Naive thymus-derived CD4-positive, alpha-beta T cell (primary cell): ENCODE measurements at regions of chr6 and their contacts with region 1.

Region 1: DNA sequence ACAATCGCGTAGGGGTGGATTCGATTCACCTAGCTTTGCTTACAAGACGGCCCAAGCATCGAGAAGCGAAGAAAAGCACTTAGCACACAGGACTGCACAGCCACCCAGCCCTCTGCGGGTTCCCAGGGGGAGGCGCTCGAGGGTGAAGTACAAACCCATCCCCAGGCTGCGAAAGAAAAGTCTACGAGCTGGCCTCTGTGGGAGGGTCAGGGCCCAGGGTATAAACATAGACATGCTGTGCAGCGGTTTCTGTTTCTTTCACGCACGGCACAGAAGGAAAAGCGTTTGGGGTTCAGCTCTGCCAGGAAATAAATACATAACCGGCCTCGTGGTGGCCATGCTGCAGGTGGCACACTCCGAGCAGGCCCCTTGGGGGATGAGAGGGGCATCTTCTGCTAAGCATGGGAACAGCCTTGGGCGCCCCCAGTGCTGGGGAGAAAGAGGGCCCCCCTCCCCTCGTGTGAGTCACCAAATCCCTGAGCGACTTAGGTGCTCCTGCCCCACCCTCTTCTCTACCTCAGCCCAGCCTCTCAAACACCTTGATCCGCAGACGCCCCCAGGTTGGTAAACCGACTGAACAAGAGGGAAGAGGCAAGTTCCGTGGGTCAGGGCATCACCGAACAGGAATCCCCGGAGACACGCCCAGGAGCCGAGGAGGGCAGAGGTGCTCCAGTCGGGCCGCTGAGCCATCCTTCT is 91.6 kb upstream of the RIPOR2 start:
- DNase-seq: peak; percentile 47 to 79 (median 69)
- ATAC-seq: peak; percentile 97
- H3K4me3 ChIP-seq: peak overlapping the region; percentile 50
- H3K4me3 Mint-ChIP-seq: peak overlapping the region; percentile 63 to 84 (median 81)
- H3K27ac ChIP-seq: peak overlapping the region; percentile 50
- H3K27ac Mint-ChIP-seq: peak overlapping the region; percentile 60 to 87 (median 83)
- H3K4me1 ChIP-seq: peaks cover 22 to 30% of the 10 kb centered on the region in 2 donors
- H3K4me1 Mint-ChIP-seq: peaks cover 27 to 57% (median 48%) of the 10 kb centered on the region in 7 donors
- H3K27me3 ChIP-seq: no peaks in the 10 kb centered on the region
- H3K27me3 Mint-ChIP-seq: no peaks in the 10 kb centered on the region

Region 2: DNA sequence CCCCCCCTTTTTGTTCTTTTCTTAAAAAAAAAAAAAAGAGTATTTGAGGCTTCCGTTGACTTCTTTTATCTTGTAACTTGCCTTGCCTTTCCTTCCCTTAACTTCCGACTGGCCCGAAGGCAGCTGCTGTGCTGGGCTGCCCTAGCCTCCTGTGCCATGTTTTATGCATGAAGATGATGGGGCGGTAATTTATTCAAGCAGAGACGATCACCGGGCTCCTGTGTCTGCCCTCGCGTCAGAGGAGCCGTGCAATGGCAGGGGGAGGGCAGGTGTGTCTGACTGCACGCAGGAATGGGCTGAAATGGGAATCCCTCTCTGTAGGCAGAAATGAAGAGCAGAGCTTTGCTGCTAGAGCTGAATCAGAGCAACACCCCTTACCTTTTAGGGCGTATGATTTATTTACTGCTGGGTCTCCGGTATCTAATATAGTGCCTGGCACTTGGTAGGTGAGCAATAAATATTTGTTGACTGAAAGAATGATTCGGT is 14.7 kb after region 1 on chr6:
- CTCF ChIA-PET with region 1: interaction called, 26 read pairs
- POLR2A ChIA-PET with region 1: interaction called, 61 read pairs
- intact Hi-C with region 1: loop called (anchors 1 kb)
- DNase-seq: peak in 7 of 9 donors; percentile 45 to 67 (median 49)
- ATAC-seq: peak; percentile 73
- H3K4me3 ChIP-seq: peak overlapping the region; percentile 60
- H3K4me3 Mint-ChIP-seq: peak overlapping the region; percentile 88 to 97 (median 92)
- H3K27ac ChIP-seq: peak overlapping the region; percentile 64
- H3K27ac Mint-ChIP-seq: peak overlapping the region; percentile 71 to 98 (median 90)
- H3K4me1 ChIP-seq: peaks cover 35 to 51% of the 10 kb centered on the region in 2 donors
- H3K4me1 Mint-ChIP-seq: peaks cover 38 to 62% (median 56%) of the 10 kb centered on the region in 7 donors
- H3K27me3 ChIP-seq: no peaks in the 10 kb centered on the region
- H3K27me3 Mint-ChIP-seq: peaks cover 0 to 3% (median 0%) of the 10 kb centered on the region in 5 donors

Region 3: GRCh38 chr6:25053875-25054371 is 26.6 kb after region 1 on chr6:
- CTCF ChIA-PET with region 1: interaction called, 16 read pairs
- POLR2A ChIA-PET with region 1: interaction called, 3 read pairs
- intact Hi-C with region 1: loop called in 1 of 2 experiments (anchors 1 kb)
- DNase-seq: no peak
- ATAC-seq: no peak
- H3K4me3 ChIP-seq: no peak overlapping the region
- H3K4me3 Mint-ChIP-seq: no peak overlapping the region
- H3K27ac ChIP-seq: no peak overlapping the region
- H3K27ac Mint-ChIP-seq: peak overlapping the region in 1 of 9 donors; percentile 59
- H3K4me1 ChIP-seq: peaks cover 36 to 59% of the 10 kb centered on the region in 2 donors
- H3K4me1 Mint-ChIP-seq: peaks cover 39 to 80% (median 65%) of the 10 kb centered on the region in 7 donors
- H3K27me3 ChIP-seq: no peaks in the 10 kb centered on the region
- H3K27me3 Mint-ChIP-seq: no peaks in the 10 kb centered on the region

Region 4: DNA sequence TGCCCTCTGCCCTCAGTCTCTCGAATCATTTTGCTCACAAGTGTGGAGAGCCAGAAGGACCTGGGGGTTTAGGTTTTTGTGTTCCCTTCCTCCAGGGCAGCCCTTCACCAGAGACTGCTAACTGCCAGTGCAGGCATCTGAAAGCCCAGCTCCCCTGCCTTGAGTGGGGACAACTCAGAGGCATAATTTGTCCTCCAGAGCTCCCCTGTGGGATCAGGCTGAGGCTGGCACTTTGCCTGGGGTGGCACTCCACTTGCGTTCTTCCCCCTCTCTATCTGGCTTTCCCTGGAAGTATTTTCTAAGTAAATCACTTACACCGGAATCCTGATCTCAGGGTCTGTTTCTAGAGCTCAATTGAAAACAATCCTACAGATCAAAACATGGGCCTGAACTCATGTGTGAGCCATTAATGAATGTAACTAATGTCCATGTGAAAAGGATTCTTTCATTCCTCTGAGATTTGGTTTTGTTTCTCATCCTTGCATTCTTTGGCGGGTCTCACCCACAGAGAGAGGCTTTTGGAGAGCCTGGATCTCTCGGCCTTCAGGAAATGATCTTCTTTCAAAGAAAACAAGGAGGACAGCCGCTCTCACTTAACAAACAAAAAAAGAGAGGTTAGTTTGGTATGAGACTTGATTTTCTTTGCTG is 34.0 kb after region 1 on chr6:
- CTCF ChIA-PET with region 1: interaction called, 16 read pairs
- POLR2A ChIA-PET with region 1: interaction called, 5 read pairs
- intact Hi-C with region 1: loop called in 1 of 2 experiments (anchors 1 kb)
- DNase-seq: no peak
- ATAC-seq: no peak
- H3K4me3 ChIP-seq: no peak overlapping the region
- H3K4me3 Mint-ChIP-seq: no peak overlapping the region
- H3K27ac ChIP-seq: no peak overlapping the region
- H3K27ac Mint-ChIP-seq: no peak overlapping the region
- H3K4me1 ChIP-seq: peaks cover 10 to 12% of the 10 kb centered on the region in 2 donors
- H3K4me1 Mint-ChIP-seq: peaks cover 9 to 18% (median 14%) of the 10 kb centered on the region in 7 donors
- H3K27me3 ChIP-seq: no peaks in the 10 kb centered on the region
- H3K27me3 Mint-ChIP-seq: no peaks in the 10 kb centered on the region

Region 5: GRCh38 chr6:25070547-25071366 is 43.4 kb after region 1 on chr6:
- CTCF ChIA-PET with region 1: interaction called, 73 read pairs
- POLR2A ChIA-PET with region 1: interaction called, 9 read pairs
- intact Hi-C with region 1: loop called (anchors 1 kb)
- DNase-seq: peak; percentile 54 to 85 (median 79)
- ATAC-seq: peak; percentile 99
- H3K4me3 ChIP-seq: no peak overlapping the region
- H3K4me3 Mint-ChIP-seq: peak overlapping the region in 8 of 10 donors; percentile 10 to 70 (median 50)
- H3K27ac ChIP-seq: no peak overlapping the region
- H3K27ac Mint-ChIP-seq: peak overlapping the region; percentile 43 to 92 (median 83)
- H3K4me1 ChIP-seq: peaks cover 0 to 3% of the 10 kb centered on the region in 2 donors
- H3K4me1 Mint-ChIP-seq: peaks cover 5 to 15% (median 9%) of the 10 kb centered on the region in 7 donors
- H3K27me3 ChIP-seq: no peaks in the 10 kb centered on the region
- H3K27me3 Mint-ChIP-seq: peaks cover 0 to 7% (median 0%) of the 10 kb centered on the region in 5 donors

Region 6: GRCh38 chr6:25085756-25086155 is 58.4 kb after region 1 on chr6:
- CTCF ChIA-PET with region 1: interaction called, 10 read pairs
- POLR2A ChIA-PET with region 1: no interaction called
- intact Hi-C with region 1: no loop called
- DNase-seq: peak in 5 of 9 donors; percentile 13 to 26 (median 19)
- ATAC-seq: peak; percentile 62
- H3K4me3 ChIP-seq: no peak overlapping the region
- H3K4me3 Mint-ChIP-seq: peak overlapping the region in 7 of 10 donors; percentile 6 to 78 (median 54)
- H3K27ac ChIP-seq: no peak overlapping the region
- H3K27ac Mint-ChIP-seq: peak overlapping the region in 6 of 9 donors; percentile 3 to 70 (median 29)
- H3K4me1 ChIP-seq: peaks cover 18 to 22% of the 10 kb centered on the region in 2 donors
- H3K4me1 Mint-ChIP-seq: peaks cover 9 to 24% (median 15%) of the 10 kb centered on the region in 7 donors
- H3K27me3 ChIP-seq: no peaks in the 10 kb centered on the region
- H3K27me3 Mint-ChIP-seq: no peaks in the 10 kb centered on the region

Region 7: GRCh38 chr6:25179051-25179778 is 151.8 kb after region 1 on chr6:
- CTCF ChIA-PET with region 1: no interaction called
- POLR2A ChIA-PET with region 1: no interaction called
- intact Hi-C with region 1: loop called in 1 of 2 experiments (anchors 5 kb)
- DNase-seq: no peak
- ATAC-seq: no peak
- H3K4me3 ChIP-seq: no peak overlapping the region
- H3K4me3 Mint-ChIP-seq: peak overlapping the region in 1 of 10 donors; percentile 9
- H3K27ac ChIP-seq: no peak overlapping the region
- H3K27ac Mint-ChIP-seq: peak overlapping the region in 1 of 9 donors; percentile 34
- H3K4me1 ChIP-seq: no peaks in the 10 kb centered on the region
- H3K4me1 Mint-ChIP-seq: peaks cover 0 to 60% (median 4%) of the 10 kb centered on the region in 7 donors
- H3K27me3 ChIP-seq: no peaks in the 10 kb centered on the region
- H3K27me3 Mint-ChIP-seq: no peaks in the 10 kb centered on the region

Region 8: GRCh38 chr6:25359191-25359861 is 332.0 kb after region 1 on chr6:
- CTCF ChIA-PET with region 1: no interaction called
- POLR2A ChIA-PET with region 1: no interaction called
- intact Hi-C with region 1: no loop called
- DNase-seq: no peak
- ATAC-seq: no peak
- H3K4me3 ChIP-seq: no peak overlapping the region
- H3K4me3 Mint-ChIP-seq: no peak overlapping the region
- H3K27ac ChIP-seq: no peak overlapping the region
- H3K27ac Mint-ChIP-seq: peak overlapping the region in 4 of 9 donors; percentile 18 to 55 (median 38)
- H3K4me1 ChIP-seq: no peaks in the 10 kb centered on the region
- H3K4me1 Mint-ChIP-seq: peaks cover 0 to 69% (median 34%) of the 10 kb centered on the region in 7 donors
- H3K27me3 ChIP-seq: no peaks in the 10 kb centered on the region
- H3K27me3 Mint-ChIP-seq: no peaks in the 10 kb centered on the region

Region 9: DNA sequence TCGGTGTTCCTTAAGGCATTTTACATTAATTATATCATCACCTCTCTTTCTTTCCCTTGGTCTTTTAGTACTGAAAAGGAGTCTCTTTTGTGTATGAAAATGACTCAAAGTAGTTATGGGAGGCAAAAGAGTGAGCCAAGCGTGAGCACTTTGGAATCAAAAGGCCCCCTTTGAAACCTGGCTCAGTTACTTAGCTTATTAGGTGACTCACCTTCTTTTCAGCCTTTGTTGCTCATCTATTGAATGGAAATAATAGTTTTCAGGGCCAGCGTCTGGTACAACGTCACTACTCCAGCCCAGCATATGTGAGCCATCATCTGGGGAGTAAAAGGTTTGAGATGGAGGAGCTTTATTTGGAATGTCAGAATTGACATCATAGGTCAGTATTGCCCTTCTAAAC is 477.3 kb after region 1 on chr6:
- CTCF ChIA-PET with region 1: no interaction called
- POLR2A ChIA-PET with region 1: no interaction called
- intact Hi-C with region 1: no loop called
- DNase-seq: no peak
- ATAC-seq: no peak
- H3K4me3 ChIP-seq: no peak overlapping the region
- H3K4me3 Mint-ChIP-seq: no peak overlapping the region
- H3K27ac ChIP-seq: no peak overlapping the region
- H3K27ac Mint-ChIP-seq: no peak overlapping the region
- H3K4me1 ChIP-seq: no peaks in the 10 kb centered on the region
- H3K4me1 Mint-ChIP-seq: no peaks in the 10 kb centered on the region
- H3K27me3 ChIP-seq: no peaks in the 10 kb centered on the region
- H3K27me3 Mint-ChIP-seq: no peaks in the 10 kb centered on the region